Activated naive CD4-positive, alpha-beta T cell treated with anti-CD3 and anti-CD28 coated beads, Interleukin-2, amount 10 ng/mL, durations not matched to agents 7 days and 5 days (primary cell): ENCODE measurements at regions of chr14 and their contacts with region 1.

Region 1: DNA sequence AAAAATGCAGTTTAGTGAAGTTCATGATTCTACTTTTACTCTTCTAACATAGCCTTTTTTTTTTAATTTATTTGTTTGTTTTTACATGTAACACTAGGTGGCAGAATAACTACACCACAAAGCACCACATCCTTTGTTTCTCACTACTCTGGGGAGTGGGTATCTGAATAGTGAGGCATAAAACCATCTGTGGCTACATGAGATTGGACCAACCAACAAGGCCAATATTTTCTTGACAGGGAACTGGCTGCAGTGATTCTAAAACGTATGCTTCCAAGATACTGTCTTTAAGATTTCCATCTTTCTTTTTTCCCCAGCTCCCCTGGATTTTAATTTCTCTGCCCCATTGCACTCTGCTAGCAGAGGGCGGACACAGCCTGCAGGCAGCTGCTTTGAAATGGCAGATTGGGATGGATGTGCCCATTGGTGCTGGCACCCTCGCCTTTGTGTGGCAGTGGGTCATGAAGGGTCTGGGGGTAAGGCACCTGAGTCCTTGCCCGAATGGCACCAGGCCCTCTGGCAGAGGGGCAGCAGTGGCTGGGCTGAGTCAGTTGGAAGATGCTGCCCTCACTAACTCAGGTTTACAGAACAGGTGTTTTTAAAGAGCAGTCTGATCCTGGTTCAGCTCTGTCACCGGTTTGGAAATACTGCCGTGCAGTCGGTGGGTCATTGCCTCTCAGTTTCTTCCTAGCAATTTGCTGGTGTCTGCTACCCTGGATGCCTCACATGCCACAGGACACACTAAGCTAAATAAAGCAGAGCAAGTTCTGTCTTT is 429.1 kb downstream of the RAD51B start:
- DNase-seq: peak; percentile 24
- H3K4me3 Mint-ChIP-seq: no peak overlapping the region
- H3K27ac Mint-ChIP-seq: no peak overlapping the region
- H3K4me1 Mint-ChIP-seq: peaks cover 24% of the 10 kb centered on the region
- H3K27me3 Mint-ChIP-seq: no peaks in the 10 kb centered on the region

Region 2: GRCh38 chr14:67934008-67934481 is 314.6 kb before region 1 on chr14:
- CTCF ChIA-PET with region 1: interaction called, 10 read pairs
- DNase-seq: peak; percentile 27
- H3K4me3 Mint-ChIP-seq: no peak overlapping the region
- H3K27ac Mint-ChIP-seq: no peak overlapping the region
- H3K4me1 Mint-ChIP-seq: peaks cover 2% of the 10 kb centered on the region
- H3K27me3 Mint-ChIP-seq: no peaks in the 10 kb centered on the region

Region 3: DNA sequence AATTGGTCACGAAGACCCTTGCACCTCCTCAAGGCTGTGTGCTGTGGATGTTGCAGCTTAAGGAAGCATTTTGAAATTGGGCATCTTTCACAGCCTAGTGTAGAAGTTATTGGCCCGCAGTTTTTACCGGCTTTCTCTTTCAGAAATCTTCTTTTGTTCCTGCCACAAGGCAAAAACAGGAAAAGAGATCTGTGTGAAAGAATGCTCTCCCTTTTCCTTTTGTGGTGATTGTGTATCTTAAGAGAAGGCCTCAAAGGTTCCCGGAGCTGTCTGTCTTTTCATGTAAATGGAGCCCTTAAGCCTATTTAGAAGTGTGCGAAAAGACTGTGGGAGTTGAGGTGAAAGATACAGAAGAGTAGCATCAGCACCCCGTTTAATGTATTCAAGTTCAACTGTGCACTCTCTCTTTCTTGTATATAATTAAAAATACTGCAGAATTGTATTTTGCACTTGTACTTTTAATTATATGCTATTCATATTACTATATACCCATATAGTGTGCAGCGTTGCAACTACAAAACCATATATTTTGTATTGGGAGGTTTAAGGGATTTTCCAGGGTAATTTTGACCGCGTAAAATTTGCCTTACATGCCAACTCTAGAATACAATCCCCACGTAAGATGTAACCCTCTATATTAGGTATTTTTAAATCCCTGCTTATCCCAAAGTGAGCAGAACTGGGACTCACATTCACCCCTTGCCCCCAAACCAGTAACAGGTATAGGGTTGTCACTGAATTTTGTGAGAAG is 12.6 kb after region 1 on chr14:
- CTCF ChIA-PET with region 1: interaction called, 11 read pairs
- DNase-seq: no peak
- H3K4me3 Mint-ChIP-seq: no peak overlapping the region
- H3K27ac Mint-ChIP-seq: peak overlapping the region; percentile 84
- H3K4me1 Mint-ChIP-seq: peaks cover 45% of the 10 kb centered on the region
- H3K27me3 Mint-ChIP-seq: no peaks in the 10 kb centered on the region

Region 4: GRCh38 chr14:68377459-68377858 is 128.8 kb after region 1 on chr14:
- CTCF ChIA-PET with region 1: no interaction called
- DNase-seq: no peak
- H3K4me3 Mint-ChIP-seq: no peak overlapping the region
- H3K27ac Mint-ChIP-seq: no peak overlapping the region
- H3K4me1 Mint-ChIP-seq: peaks cover 42% of the 10 kb centered on the region
- H3K27me3 Mint-ChIP-seq: no peaks in the 10 kb centered on the region

Region 5: DNA sequence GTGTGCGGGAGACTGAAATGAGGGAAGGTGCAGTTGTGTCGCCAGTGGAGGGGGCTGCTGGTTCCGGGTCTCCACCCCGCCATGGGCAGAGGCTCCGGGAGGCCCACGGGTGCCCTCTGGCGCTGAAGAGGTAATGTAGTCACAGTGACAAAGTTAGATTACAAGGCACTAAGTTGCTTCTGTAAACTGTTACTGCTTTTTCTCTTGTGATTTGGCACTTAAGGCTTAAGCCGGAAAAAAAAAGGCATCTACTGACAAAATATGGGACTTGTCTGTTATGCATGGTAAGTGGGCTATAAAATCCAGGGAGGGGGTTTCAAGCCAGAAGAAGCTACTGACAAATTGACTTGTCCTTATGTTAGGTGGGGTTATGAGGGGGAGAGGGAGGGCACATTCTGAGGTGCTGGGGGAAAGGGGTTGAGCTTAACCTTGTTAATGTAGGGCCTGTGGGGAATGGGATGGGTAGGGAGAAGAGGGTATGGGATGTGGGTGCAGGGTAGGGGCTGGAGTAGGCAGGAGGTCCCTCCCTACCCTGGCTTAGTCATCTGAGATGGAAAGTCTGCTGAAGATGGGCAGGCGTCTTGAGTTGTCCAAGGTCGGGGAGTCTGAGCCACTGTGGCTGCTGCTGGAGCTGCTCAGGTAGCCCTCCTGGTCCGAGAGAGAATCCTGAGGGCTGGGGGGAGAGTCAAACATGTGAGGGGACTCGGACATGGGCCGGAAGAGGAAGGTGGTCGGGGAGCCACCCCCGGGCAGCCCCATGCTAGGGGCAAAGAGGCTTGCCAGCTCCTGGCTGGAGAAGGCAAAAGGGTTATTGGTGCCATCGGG is 540.5 kb after region 1 on chr14:
- CTCF ChIA-PET with region 1: interaction called, 79 read pairs
- DNase-seq: peak; percentile 93
- H3K4me3 Mint-ChIP-seq: peak overlapping the region; percentile 95
- H3K27ac Mint-ChIP-seq: peak overlapping the region; percentile 100
- H3K4me1 Mint-ChIP-seq: peaks cover 57% of the 10 kb centered on the region
- H3K27me3 Mint-ChIP-seq: peaks cover 5% of the 10 kb centered on the region

Region 6: DNA sequence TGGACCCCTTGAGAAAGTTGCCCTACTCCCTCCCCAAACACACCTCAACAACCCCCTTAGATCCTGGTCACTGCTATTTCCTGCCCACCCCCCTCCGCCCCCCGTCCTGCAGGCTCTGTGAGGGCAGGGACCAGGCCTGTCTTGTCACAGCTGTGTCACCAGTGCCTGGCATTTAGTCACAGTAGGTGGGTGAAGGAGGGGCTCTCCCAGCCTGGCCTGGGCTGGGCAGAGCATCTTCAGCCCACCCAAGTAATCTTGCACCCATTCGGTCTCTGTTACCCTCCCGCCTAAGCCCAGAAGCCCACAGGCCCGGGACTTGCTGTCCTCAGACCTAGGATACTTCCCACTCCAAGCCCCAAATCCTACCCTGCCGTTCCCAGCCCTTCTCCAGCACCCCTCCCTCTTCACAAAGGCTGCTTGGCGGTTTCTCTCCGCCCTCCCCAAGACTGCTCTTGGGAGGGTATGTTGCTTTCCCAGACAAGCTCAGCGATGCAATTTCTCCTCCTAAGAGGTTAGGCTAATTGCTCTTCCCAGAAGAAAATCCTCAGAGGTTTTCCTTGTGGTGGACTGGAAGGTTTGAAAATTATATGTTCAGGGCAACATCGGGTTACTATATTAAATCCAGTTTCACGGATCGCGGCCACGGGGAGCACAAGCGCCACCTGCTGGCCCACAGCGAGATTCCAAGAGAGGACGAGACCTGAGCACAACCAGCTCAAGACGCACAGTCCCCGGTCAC is 595.0 kb after region 1 on chr14:
- CTCF ChIA-PET with region 1: interaction called, 13 read pairs
- DNase-seq: peak; percentile 83
- H3K4me3 Mint-ChIP-seq: no peak overlapping the region
- H3K27ac Mint-ChIP-seq: no peak overlapping the region
- H3K4me1 Mint-ChIP-seq: peaks cover 18% of the 10 kb centered on the region
- H3K27me3 Mint-ChIP-seq: peaks cover 16% of the 10 kb centered on the region